Activated B cell treated with CpG ODN at 0.5 μM for 24 hours (primary cell): ENCODE measurements at regions of chr13 and their contacts with region 1.

Region 1: DNA sequence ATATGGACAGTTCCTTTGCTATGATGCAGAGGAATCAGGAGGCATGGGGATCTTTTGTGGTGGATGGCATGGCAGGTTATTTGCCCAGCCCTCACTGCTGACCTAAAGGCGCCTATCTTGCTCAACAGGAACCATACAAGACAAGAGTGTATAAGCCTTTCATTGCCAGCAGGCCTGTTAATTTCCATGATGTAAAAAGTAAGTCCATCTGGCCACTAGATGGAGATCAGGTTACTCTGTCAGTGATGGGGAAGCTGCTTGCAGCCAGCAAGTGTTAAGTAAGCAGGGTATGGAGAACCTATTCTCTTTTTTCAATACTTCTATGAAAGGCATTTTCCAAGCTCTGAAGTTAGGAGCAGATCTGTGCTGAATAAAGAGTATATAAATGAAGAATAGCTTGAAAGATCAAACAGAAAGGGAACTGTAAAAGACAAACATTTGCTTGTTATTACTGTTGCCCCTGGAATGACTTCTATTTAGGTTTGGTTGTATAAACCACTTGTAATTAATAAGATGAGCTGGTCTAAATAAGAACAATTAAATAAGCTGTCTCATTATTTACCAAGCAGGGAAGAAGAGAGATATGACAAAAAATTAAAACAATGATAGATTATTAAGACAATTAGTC is 210.9 kb downstream of the RGCC start:
- DNase-seq: no peak
- ATAC-seq: peak; percentile 68
- H3K4me3 Mint-ChIP-seq: no peak overlapping the region
- H3K27ac Mint-ChIP-seq: no peak overlapping the region
- H3K4me1 Mint-ChIP-seq: no peaks in the 10 kb centered on the region
- H3K27me3 Mint-ChIP-seq: peaks cover 17% of the 10 kb centered on the region
- CTCF ChIP-seq: no peak

Region 2: GRCh38 chr13:41678249-41678648 is 10.0 kb after region 1 on chr13:
- CTCF ChIA-PET with region 1: interaction called, 17 read pairs
- POLR2A ChIA-PET with region 1: no interaction called
- intact Hi-C with region 1: no loop called
- DNase-seq: no peak
- ATAC-seq: no peak
- H3K4me3 Mint-ChIP-seq: no peak overlapping the region
- H3K27ac Mint-ChIP-seq: no peak overlapping the region
- H3K4me1 Mint-ChIP-seq: no peaks in the 10 kb centered on the region
- H3K27me3 Mint-ChIP-seq: no peaks in the 10 kb centered on the region
- CTCF ChIP-seq: no peak

Region 3: GRCh38 chr13:41905600-41906254 is 237.5 kb after region 1 on chr13:
- CTCF ChIA-PET with region 1: no interaction called
- POLR2A ChIA-PET with region 1: no interaction called
- intact Hi-C with region 1: loop called (anchors 5 kb)
- DNase-seq: no peak
- ATAC-seq: peak; percentile 78
- H3K4me3 Mint-ChIP-seq: no peak overlapping the region
- H3K27ac Mint-ChIP-seq: no peak overlapping the region
- H3K4me1 Mint-ChIP-seq: no peaks in the 10 kb centered on the region
- H3K27me3 Mint-ChIP-seq: no peaks in the 10 kb centered on the region
- CTCF ChIP-seq: peak; percentile 30

Region 4: GRCh38 chr13:42215578-42216421 is 547.6 kb after region 1 on chr13:
- CTCF ChIA-PET with region 1: no interaction called
- POLR2A ChIA-PET with region 1: no interaction called
- intact Hi-C with region 1: loop called (anchors 1 kb)
- DNase-seq: no peak
- ATAC-seq: no peak
- H3K4me3 Mint-ChIP-seq: no peak overlapping the region
- H3K27ac Mint-ChIP-seq: no peak overlapping the region
- H3K4me1 Mint-ChIP-seq: no peaks in the 10 kb centered on the region
- H3K27me3 Mint-ChIP-seq: no peaks in the 10 kb centered on the region
- CTCF ChIP-seq: no peak

Region 5: GRCh38 chr13:43648733-43649132 is 1980.5 kb after region 1 on chr13:
- CTCF ChIA-PET with region 1: no interaction called
- POLR2A ChIA-PET with region 1: no interaction called
- intact Hi-C with region 1: no loop called
- DNase-seq: no peak
- ATAC-seq: no peak
- H3K4me3 Mint-ChIP-seq: no peak overlapping the region
- H3K27ac Mint-ChIP-seq: no peak overlapping the region
- H3K4me1 Mint-ChIP-seq: no peaks in the 10 kb centered on the region
- H3K27me3 Mint-ChIP-seq: peaks cover 5% of the 10 kb centered on the region
- CTCF ChIP-seq: no peak